ENCODE measurements at regions of chr2 and their contacts with region 1.

Region 1: GRCh38 chr2:218438601-218438995 is 19.7 kb downstream of the VIL1 start:
- DNase-seq: no peak
- H3K4me3 ChIP-seq: no peak overlapping the region
- H3K27ac ChIP-seq: no peak overlapping the region
- H3K27me3 ChIP-seq: peaks cover 3% of the 10 kb centered on the region
- CTCF ChIP-seq: no peak

Region 2: GRCh38 chr2:218448934-218449333 is 10.3 kb after region 1 on chr2:
- CTCF ChIA-PET with region 1: no interaction called
- POLR2A ChIA-PET with region 1: interaction called, 11 read pairs
- DNase-seq: peak; percentile 6
- H3K4me3 ChIP-seq: no peak overlapping the region
- H3K27ac ChIP-seq: no peak overlapping the region
- H3K27me3 ChIP-seq: no peaks in the 10 kb centered on the region
- CTCF ChIP-seq: no peak